ENCODE measurements at regions of chr2 and their contacts with region 1.

Region 1: GRCh38 chr2:190534310-190535120 is at the start of gene NEMP2:
- DNase-seq: peak; percentile 88 to 97 (median 96)
- ATAC-seq: peak; percentile 94 to 95
- H3K4me3 ChIP-seq: peak within 1 kb of the TSS; percentile 60
- H3K27ac ChIP-seq: peak within 1 kb of the TSS; percentile 75
- H3K4me1 ChIP-seq: peaks cover 6% of the 10 kb centered on the region
- H3K27me3 ChIP-seq: no peaks in the 10 kb centered on the region
- total RNA-seq, gene NEMP2: 3.7 to 8.9 (median 6.2) TPM

Region 2: GRCh38 chr2:190571686-190572085 is 37.2 kb after region 1 on chr2:
- intact Hi-C with region 1: loop called in 1 of 4 experiments (anchors 5 kb)
- DNase-seq: no peak
- ATAC-seq: peak; percentile 54 to 63
- H3K4me3 ChIP-seq: no peak overlapping the region
- H3K27ac ChIP-seq: no peak overlapping the region
- H3K4me1 ChIP-seq: no peaks in the 10 kb centered on the region
- H3K27me3 ChIP-seq: no peaks in the 10 kb centered on the region

Region 3: GRCh38 chr2:190636373-190636772 is 101.9 kb after region 1 on chr2:
- intact Hi-C with region 1: loop called in 2 of 4 experiments (anchors 5 to 10 kb)
- DNase-seq: no peak
- ATAC-seq: peak; percentile 56 to 69
- H3K4me3 ChIP-seq: no peak overlapping the region
- H3K27ac ChIP-seq: no peak overlapping the region
- H3K4me1 ChIP-seq: peaks cover 9% of the 10 kb centered on the region
- H3K27me3 ChIP-seq: no peaks in the 10 kb centered on the region

Region 4: GRCh38 chr2:190648289-190649034 is 113.9 kb after region 1 on chr2:
- intact Hi-C with region 1: loop called in 3 of 4 experiments (anchors 5 to 10 kb)
- DNase-seq: peak; percentile 94 to 98 (median 97)
- ATAC-seq: peak; percentile 96
- H3K4me3 ChIP-seq: peak overlapping the region; percentile 52
- H3K27ac ChIP-seq: peak overlapping the region; percentile 93
- H3K4me1 ChIP-seq: no peaks in the 10 kb centered on the region
- H3K27me3 ChIP-seq: no peaks in the 10 kb centered on the region

Measured in right cardiac atrium (tissue), 5 donors.